PC-3 (cell line): ENCODE measurements at regions of chr3 and their contacts with region 1.

Region 1: GRCh38 chr3:136404056-136404455 is 153.9 kb downstream of the PCCB start:
- DNase-seq: no peak
- ATAC-seq: no peak
- H3K4me3 ChIP-seq: no peak overlapping the region
- H3K27ac ChIP-seq: no peak overlapping the region
- H3K4me1 ChIP-seq: no peaks in the 10 kb centered on the region
- H3K27me3 ChIP-seq: no peaks in the 10 kb centered on the region
- CTCF ChIP-seq: no peak

Region 2: DNA sequence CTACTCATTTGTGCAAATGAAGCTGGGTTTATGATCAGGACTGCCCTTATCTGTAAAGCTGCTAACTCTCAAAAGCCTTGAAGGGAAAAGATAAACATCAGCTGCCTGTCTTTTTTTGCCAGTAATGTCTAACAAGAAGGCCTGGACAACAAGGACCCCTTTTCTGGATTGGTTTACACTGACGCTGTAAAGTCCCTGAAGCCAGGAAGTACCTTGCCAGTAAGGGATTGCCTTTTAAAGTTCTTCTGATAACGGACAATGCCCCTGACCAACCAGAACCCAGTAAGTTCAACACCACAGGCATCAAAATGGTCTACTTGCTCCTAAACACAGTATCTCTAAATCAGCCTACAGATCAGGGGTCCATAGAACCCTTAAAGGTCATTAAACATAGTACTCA is 24.1 kb after region 1 on chr3:
- CTCF ChIA-PET with region 1: no interaction called
- POLR2A ChIA-PET with region 1: interaction called, 16 read pairs
- intact Hi-C with region 1: no loop called
- DNase-seq: no peak
- ATAC-seq: no peak
- H3K4me3 ChIP-seq: no peak overlapping the region
- H3K27ac ChIP-seq: no peak overlapping the region
- H3K4me1 ChIP-seq: no peaks in the 10 kb centered on the region
- H3K27me3 ChIP-seq: no peaks in the 10 kb centered on the region
- CTCF ChIP-seq: no peak